WTC11 (cell line): ENCODE measurements at regions of chr1 and their contacts with region 1.

Region 1: GRCh38 chr1:3695326-3696217 is 43.3 kb downstream of the TP73 start:
- DNase-seq: peak; percentile 86
- ATAC-seq: peak; percentile 96
- H3K4me3 Mint-ChIP-seq: no peak overlapping the region
- H3K27ac Mint-ChIP-seq: no peak overlapping the region
- H3K4me1 Mint-ChIP-seq: peaks cover 10% of the 10 kb centered on the region
- H3K27me3 Mint-ChIP-seq: peaks cover 5% of the 10 kb centered on the region
- CTCF ChIP-seq: peak; percentile 53; the same call in 1 of the 2 replicates

Region 2: GRCh38 chr1:3543076-3544039 is 152.2 kb before region 1 on chr1:
- CTCF ChIA-PET with region 1: no interaction called
- POLR2A ChIA-PET with region 1: no interaction called
- DNase-seq: peak; percentile 44
- ATAC-seq: peak; percentile 14; the same call in 1 of the 2 replicates
- H3K4me3 Mint-ChIP-seq: no peak overlapping the region
- H3K27ac Mint-ChIP-seq: no peak overlapping the region
- H3K4me1 Mint-ChIP-seq: no peaks in the 10 kb centered on the region
- H3K27me3 Mint-ChIP-seq: no peaks in the 10 kb centered on the region
- CTCF ChIP-seq: no peak

Region 3: DNA sequence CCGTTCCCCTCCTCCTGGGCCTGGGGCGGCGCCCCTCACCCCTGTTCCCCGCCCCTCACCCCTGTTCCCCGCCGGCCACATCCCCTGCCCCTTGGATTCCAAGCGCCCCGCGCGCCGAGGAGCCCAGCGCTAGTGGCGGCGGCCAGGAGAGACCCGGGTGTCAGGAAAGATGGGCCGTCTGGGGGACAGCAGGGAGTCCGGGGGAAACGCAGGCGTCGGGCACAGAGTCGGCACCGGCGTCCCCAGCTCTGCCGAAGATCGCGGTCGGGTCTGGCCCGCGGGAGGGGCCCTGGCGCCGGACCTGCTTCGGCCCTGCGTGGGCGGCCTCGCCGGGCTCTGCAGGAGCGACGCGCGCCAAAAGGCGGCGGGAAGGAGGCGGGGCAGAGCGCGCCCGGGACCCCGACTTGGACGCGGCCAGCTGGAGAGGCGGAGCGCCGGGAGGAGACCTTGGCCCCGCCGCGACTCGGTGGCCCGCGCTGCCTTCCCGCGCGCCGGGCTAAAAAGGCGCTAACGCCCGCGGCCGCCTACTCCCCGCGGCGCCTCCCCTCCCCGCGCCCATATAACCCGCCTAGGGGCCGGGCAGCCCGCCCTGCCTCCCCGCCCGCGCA is 43.5 kb before region 1 on chr1 and contains the start of gene TP73:
- CTCF ChIA-PET with region 1: interaction called, 10 read pairs
- POLR2A ChIA-PET with region 1: no interaction called
- DNase-seq: peak; percentile 29
- ATAC-seq: no peak
- H3K4me3 Mint-ChIP-seq: peak within 1 kb of the TSS; percentile 82
- H3K27ac Mint-ChIP-seq: no peak within 1 kb of the TSS
- H3K4me1 Mint-ChIP-seq: peaks cover 10% of the 10 kb centered on the region
- H3K27me3 Mint-ChIP-seq: peaks cover 64% of the 10 kb centered on the region
- CTCF ChIP-seq: no peak
- total RNA-seq, gene TP73: 5.7 to 6.4 TPM (median 5.8 TPM) in 3 replicates

Region 4: DNA sequence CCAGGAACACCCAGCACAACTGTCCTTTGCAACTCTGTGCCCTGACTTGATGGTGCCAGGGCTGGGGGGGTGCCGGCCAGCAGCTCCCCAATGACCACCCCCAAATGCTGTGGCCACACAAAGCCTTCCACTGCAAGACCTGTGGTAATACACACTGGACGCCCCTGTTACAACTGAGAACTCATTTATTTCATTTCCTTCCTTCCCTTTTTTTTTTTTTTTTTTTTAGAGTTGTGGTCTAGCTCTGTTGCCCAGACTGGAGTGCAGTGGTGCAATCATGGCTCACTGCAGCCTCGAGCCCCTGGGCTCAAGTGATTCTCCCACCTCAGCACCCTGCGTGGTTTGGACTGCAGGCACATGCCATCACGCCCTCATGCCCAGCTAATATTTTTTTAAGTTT is 18.1 kb before region 1 on chr1:
- CTCF ChIA-PET with region 1: interaction called, 17 read pairs
- POLR2A ChIA-PET with region 1: no interaction called
- DNase-seq: no peak
- ATAC-seq: no peak
- H3K4me3 Mint-ChIP-seq: no peak overlapping the region
- H3K27ac Mint-ChIP-seq: no peak overlapping the region
- H3K4me1 Mint-ChIP-seq: peaks cover 24% of the 10 kb centered on the region
- H3K27me3 Mint-ChIP-seq: no peaks in the 10 kb centered on the region; the same call in 1 of the 2 replicates
- CTCF ChIP-seq: no peak

Region 5: DNA sequence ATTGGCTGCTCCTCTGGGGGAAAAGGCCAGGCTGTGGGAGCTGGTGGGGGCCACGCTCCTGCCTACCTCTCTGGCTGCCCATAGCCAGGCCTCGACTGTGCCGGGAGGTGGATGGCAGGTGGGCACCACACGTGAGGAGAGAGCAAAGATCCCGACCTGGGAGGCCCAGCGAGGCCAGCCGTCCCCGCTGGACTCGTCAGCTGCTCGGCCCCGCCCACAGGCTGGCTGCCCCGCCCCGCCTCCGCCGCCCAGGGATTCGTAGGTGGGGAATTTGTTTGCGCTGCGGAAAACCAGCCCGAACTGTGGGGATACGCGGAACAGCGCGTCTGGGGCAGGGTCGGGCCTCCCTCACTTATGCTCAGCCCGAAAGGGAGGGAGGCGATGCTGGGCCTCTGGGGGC is 11.6 kb before region 1 on chr1:
- CTCF ChIA-PET with region 1: interaction called, 17 read pairs
- POLR2A ChIA-PET with region 1: no interaction called
- DNase-seq: peak; percentile 88
- ATAC-seq: peak; percentile 74
- H3K4me3 Mint-ChIP-seq: no peak overlapping the region; the same call in 1 of the 2 replicates
- H3K27ac Mint-ChIP-seq: no peak overlapping the region
- H3K4me1 Mint-ChIP-seq: peaks cover 15% of the 10 kb centered on the region
- H3K27me3 Mint-ChIP-seq: peaks cover 7% of the 10 kb centered on the region
- CTCF ChIP-seq: no peak

Region 6: DNA sequence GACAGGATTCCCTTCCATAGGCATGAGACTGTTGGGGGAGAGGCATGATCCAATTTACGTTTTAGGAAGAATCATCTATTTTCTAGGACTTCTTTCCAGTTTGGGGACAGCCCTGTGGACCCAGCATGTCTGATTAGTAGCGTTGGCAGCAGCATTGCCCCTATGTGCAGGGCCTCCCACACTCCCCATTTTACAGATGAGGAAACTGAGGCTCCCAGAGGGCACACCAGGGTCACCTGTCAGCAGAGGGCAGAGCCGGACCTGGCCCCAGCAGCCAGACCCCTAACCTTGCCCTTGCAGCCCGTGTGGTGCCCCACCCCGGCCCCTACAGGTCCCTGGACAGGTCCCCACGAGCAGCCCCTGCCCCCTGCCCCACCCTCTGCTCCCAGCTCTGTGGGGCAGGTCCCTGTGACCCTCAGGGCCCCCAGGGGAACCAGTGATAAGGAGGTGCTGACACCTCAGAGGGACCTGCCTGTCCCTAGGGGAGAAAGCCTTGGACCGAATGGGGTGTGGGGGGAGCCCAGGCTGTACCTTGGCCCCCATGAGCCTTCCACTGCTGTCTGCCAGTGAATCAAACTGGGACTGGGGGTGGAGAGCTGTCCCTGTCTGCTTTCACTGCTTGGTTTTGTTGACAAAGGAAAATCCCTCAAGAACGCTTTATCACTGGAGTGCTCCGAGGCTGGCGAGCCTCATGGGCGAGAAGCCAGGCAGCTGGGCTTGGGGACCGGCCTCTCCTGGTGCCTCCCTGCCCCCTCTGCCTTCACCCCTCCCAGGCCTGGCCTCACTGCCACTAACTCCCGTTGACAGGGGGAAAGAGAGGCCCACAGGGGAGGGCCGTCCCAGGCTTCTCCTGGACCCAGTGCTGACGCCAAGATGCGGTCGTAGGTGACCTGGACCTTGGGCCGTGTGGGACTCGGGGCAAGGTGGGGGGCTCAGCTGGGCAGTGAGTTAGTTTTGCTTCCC is 17.3 kb after region 1 on chr1:
- CTCF ChIA-PET with region 1: interaction called, 22 read pairs
- POLR2A ChIA-PET with region 1: interaction called, 3 read pairs
- DNase-seq: no peak
- ATAC-seq: no peak
- H3K4me3 Mint-ChIP-seq: no peak overlapping the region
- H3K27ac Mint-ChIP-seq: no peak overlapping the region
- H3K4me1 Mint-ChIP-seq: peaks cover 9% of the 10 kb centered on the region
- H3K27me3 Mint-ChIP-seq: peaks cover 3% of the 10 kb centered on the region
- CTCF ChIP-seq: no peak

Region 7: GRCh38 chr1:3717715-3718601 is 22.4 kb after region 1 on chr1:
- CTCF ChIA-PET with region 1: interaction called, 28 read pairs
- POLR2A ChIA-PET with region 1: interaction called, 3 read pairs
- DNase-seq: peak; percentile 81
- ATAC-seq: peak; percentile 69
- H3K4me3 Mint-ChIP-seq: peak overlapping the region; percentile 37; the same call in 1 of the 2 replicates
- H3K27ac Mint-ChIP-seq: no peak overlapping the region
- H3K4me1 Mint-ChIP-seq: peaks cover 8% of the 10 kb centered on the region
- H3K27me3 Mint-ChIP-seq: no peaks in the 10 kb centered on the region
- CTCF ChIP-seq: no peak